ENCODE measurements at regions of chr7 and their contacts with region 1.

Region 1: DNA sequence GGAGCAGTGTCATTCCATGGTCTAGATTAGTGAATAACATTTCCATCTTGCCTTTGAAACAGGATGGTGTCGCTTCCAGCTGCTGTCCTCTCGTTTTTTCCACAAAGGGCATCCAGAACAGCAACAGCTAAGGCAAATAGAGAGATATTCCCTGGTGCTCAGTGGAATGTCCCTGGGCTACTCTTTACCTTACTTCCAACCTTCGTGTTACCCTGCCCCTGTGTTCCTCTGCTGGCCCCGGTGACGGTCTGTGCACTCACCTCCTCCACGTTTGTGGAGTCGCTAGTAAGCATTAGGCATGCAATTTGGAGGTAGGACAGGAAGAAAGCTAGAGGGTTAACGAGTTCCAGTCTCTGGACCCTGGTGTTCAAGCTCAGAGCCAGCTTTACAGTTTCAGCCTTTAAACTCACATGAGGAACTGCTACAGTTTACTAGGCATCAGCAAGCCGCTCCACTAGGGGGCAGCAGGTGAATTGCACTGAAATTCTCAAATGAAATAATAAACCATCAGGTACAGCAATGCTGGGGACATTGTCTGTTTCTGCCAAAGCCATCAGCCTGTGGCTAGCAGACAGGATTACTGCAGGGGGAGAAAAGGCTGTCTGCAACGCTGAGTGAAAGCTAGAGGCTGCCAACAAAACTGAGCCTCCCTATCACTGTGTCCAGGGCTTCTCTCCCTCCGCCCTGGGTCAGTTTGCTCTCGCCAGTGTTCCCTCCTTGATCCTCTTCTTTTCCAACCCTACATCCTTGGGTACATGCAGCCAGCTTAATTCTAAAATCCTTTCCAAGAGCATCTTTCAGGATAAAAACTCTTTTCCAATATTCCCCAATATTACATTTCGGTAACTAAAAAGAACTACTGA is 9.0 kb downstream of the MRPL32 start:
- DNase-seq: peak; percentile 51
- ATAC-seq: peak; percentile 57
- H3K4me3 Mint-ChIP-seq: no peak overlapping the region
- H3K27ac Mint-ChIP-seq: no peak overlapping the region
- H3K4me1 Mint-ChIP-seq: peaks cover 6% of the 10 kb centered on the region
- H3K27me3 Mint-ChIP-seq: no peaks in the 10 kb centered on the region
- CTCF ChIP-seq: peak; percentile 80

Region 2: GRCh38 chr7:43038254-43038653 is 97.0 kb after region 1 on chr7:
- CTCF ChIA-PET with region 1: no interaction called
- POLR2A ChIA-PET with region 1: no interaction called
- intact Hi-C with region 1: no loop called
- DNase-seq: no peak
- ATAC-seq: no peak
- H3K4me3 Mint-ChIP-seq: no peak overlapping the region
- H3K27ac Mint-ChIP-seq: no peak overlapping the region
- H3K4me1 Mint-ChIP-seq: no peaks in the 10 kb centered on the region
- H3K27me3 Mint-ChIP-seq: peaks cover 6% of the 10 kb centered on the region
- CTCF ChIP-seq: no peak

Region 3: DNA sequence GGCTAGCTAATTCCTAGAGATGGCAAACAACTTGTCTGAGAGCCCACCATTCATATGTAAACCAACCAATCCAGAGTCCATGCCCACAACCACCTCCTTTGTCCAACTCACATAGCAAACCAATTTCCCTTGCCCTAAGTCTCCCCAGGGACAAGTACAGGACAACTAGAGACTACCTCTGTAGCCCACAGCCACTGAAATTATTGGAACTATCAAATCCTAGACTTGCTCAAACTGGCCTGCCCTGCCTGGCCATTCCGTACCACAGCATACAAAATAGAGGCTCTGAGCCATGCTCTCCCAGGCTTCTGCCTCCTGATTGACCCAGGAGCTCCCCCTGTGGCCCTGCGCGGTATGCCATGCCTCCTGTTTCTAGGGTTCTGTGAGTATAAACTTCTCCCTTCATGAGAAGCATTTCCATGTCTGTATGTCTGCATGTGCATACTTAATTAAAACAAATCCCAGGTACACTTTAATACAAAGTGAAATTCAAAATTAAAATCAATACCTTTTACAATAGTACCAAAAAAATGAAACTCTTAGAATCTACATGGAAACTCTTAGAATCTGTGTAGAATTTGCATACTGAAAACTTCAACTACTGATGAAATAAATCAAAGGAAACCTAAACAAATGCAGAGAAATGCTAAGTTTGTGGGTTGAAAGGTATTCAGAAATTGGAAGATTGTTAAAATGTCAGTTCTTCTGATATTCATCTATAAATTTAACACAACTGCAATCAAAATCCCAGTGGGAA is 167.2 kb after region 1 on chr7:
- CTCF ChIA-PET with region 1: interaction called, 4 read pairs
- POLR2A ChIA-PET with region 1: no interaction called
- intact Hi-C with region 1: loop called (anchors 1 kb)
- DNase-seq: peak; percentile 30
- ATAC-seq: peak; percentile 56
- H3K4me3 Mint-ChIP-seq: no peak overlapping the region
- H3K27ac Mint-ChIP-seq: no peak overlapping the region
- H3K4me1 Mint-ChIP-seq: peaks cover 2% of the 10 kb centered on the region
- H3K27me3 Mint-ChIP-seq: peaks cover 34% of the 10 kb centered on the region
- CTCF ChIP-seq: peak; percentile 59

Region 4: DNA sequence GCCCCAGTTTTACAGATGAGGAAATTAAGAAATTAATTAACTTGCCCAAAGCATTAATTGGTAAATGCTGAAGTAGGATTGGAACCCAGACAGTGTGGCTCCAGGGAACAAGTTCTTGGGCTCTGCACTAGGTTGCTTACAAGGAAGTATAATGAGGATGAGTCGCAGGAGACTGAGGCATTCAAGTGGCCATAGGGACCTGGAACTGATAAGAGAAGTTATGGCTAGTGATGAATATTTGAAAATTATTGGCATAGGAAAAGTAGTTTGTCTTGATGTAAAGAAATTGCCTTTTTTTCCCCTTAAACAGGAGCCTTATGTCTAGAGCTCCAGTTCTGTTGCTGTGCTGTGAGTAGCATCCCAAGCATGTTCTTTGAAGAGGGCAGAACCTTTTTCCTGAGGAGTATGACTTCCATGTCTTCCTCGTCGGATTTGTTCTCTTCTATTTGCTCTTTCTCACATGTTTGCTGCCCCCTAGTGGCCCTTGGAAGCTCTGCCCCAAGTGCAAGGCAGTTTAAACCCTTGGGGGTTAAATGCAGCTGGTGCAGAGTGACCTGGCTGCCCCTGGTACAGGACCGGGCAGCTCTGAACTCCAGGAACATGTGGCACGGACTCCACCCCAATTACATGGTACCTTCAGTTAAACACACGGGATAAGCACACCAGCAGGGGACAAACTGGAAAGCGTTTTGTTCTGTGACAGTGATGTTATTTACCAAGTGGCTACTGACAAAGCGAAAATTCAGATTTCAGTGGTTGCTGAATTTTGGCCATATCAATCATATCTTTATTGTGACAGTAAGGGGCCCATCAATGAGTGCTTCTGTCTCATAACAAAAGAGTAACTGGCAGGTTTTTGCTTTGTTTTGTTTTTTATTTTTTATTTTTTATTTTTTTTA is 320.0 kb after region 1 on chr7:
- CTCF ChIA-PET with region 1: interaction called, 24 read pairs
- POLR2A ChIA-PET with region 1: no interaction called
- intact Hi-C with region 1: loop called (anchors 1 kb)
- DNase-seq: peak; percentile 47
- ATAC-seq: peak; percentile 58
- H3K4me3 Mint-ChIP-seq: no peak overlapping the region
- H3K27ac Mint-ChIP-seq: no peak overlapping the region
- H3K4me1 Mint-ChIP-seq: no peaks in the 10 kb centered on the region
- H3K27me3 Mint-ChIP-seq: peaks cover 5% of the 10 kb centered on the region
- CTCF ChIP-seq: no peak

Region 5: DNA sequence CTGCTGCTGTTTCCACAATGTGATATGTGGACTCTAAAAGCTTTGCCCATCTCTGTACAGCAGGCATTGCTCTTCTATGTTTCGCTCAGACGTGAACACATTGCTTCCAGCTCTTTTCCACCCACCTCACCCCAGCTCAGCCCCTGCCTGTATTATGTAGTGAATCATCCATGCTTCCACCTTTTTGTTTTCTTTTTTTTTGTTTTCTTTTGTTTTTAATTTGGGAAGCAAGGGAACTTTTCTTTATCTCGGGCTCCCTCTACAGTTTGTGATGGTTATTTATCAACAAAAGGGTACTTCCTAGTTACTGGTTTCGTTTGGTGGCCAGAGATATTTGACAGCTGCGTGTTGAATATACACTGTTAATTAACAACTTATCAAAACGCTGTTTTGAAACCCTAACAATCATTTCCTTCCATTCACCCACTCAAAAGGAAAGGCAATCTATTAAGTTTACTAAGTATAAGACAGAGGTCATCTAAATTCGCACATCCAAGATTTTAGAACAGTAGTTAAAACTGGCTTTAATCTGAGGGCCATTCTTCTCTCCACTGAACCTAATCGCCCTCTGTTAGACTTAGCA is 513.8 kb after region 1 on chr7:
- CTCF ChIA-PET with region 1: no interaction called
- POLR2A ChIA-PET with region 1: no interaction called
- intact Hi-C with region 1: loop called (anchors 10 kb)
- DNase-seq: no peak
- ATAC-seq: no peak
- H3K4me3 Mint-ChIP-seq: no peak overlapping the region
- H3K27ac Mint-ChIP-seq: no peak overlapping the region
- H3K4me1 Mint-ChIP-seq: peaks cover 4% of the 10 kb centered on the region
- H3K27me3 Mint-ChIP-seq: no peaks in the 10 kb centered on the region
- CTCF ChIP-seq: no peak